Calu3 (cell line): ENCODE measurements at regions of chr2 and their contacts with region 1.

Region 1: GRCh38 chr2:66408905-66409304 is 26.0 kb upstream of the MEIS1 start:
- DNase-seq: no peak
- H3K4me3 Mint-ChIP-seq: no peak overlapping the region
- H3K27ac Mint-ChIP-seq: no peak overlapping the region
- H3K4me1 Mint-ChIP-seq: no peaks in the 10 kb centered on the region
- H3K27me3 Mint-ChIP-seq: no peaks in the 10 kb centered on the region
- CTCF ChIP-seq: no peak

Region 2: DNA sequence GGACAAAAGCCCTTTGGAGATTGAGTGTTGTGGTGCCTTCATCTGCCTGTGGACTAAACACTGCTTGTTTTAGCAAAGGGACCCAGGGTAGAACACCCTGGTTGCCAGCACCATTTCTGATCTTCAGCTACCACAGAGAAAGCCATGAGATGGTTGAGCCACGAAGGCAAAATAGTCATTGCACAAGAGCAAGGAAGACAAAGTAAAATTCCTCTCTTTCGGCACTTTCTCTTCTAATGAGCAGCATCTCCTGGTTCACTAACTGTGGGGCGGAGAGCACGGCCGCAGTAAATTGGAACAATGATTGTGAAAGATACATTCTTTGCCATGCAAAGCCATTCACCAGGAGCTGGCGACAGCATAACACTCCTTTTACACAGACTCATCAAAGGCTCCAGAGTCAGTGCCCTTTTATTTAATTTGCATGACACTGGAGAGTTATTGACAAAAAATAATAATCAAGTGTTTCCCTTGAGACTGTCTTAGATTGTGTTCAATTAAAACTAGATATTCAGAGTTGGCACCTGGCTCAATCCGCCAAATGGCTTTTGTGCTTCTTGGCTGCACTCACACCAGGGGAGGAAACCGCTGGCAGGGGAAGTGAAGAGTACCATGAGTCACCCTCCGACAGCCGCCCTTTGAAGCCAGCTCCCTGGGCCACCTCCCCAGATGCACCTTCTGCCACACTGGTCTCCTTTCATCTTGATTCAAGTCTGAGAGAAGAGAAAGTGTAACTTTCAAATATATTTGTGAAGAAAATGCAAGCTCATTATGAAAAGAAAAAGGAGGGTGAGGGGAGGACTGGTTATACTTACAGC is 74.5 kb before region 1 on chr2:
- CTCF ChIA-PET with region 1: no interaction called
- intact Hi-C with region 1: loop called (anchors 5 kb)
- DNase-seq: peak; percentile 68
- H3K4me3 Mint-ChIP-seq: no peak overlapping the region
- H3K27ac Mint-ChIP-seq: peak overlapping the region; percentile 56
- H3K4me1 Mint-ChIP-seq: peaks cover 15% of the 10 kb centered on the region
- H3K27me3 Mint-ChIP-seq: no peaks in the 10 kb centered on the region
- CTCF ChIP-seq: no peak